Cardiac septum (tissue), 1 donor: ENCODE measurements at regions of chr18 and their contacts with region 1.

Region 1: GRCh38 chr18:3281456-3282400 is 19.8 kb downstream of the MYL12B start:
- DNase-seq: no peak

Region 2: GRCh38 chr18:3454365-3455089 is 172.8 kb after region 1 on chr18:
- intact Hi-C with region 1: loop called (anchors 1 kb)
- DNase-seq: no peak

Region 3: GRCh38 chr18:3585656-3586509 is 304.2 kb after region 1 on chr18:
- intact Hi-C with region 1: loop called (anchors 5 kb)
- DNase-seq: peak; percentile 84

Region 4: GRCh38 chr18:3665780-3666525 is 384.2 kb after region 1 on chr18:
- intact Hi-C with region 1: loop called (anchors 2 kb)
- DNase-seq: peak; percentile 85